GM12878 (cell line): ENCODE measurements at regions of chr1 and their contacts with region 1.

Region 1: DNA sequence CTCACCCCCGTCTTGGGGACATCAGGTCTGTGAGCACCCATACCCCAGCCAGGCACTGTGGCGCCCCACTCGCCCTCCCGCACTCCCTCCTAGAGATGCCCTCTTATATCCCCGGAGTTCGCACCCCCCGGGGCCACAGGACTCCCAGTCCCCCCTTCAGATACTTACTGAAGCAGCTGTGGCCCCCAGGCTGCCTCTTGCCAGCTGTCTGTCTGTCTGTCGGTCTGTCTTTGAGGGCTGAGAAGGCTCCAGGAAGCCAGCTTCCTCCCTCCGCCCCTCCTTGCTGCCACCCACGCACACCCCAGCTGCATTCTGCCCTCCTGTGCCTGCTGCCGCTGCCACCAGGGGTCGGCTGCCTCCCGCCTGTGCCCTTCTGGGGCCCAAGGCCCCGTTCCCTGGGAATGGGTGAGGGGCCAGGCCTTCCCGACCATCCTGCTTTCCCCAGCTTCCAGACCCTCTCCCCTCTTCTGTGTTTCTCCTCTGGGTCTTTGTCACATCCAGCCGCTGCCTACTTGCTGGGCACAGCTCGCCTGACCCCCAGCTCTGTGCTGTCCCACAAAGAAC is at the start of gene PTPN7:
- DNase-seq: peak; percentile 48
- ATAC-seq: peak; percentile 67
- H3K4me3 ChIP-seq: peak within 1 kb of the TSS; percentile 85
- H3K27ac ChIP-seq: peak within 1 kb of the TSS; percentile 97
- H3K4me1 ChIP-seq: peaks cover 58% of the 10 kb centered on the region
- H3K27me3 ChIP-seq: no peaks in the 10 kb centered on the region
- CTCF ChIP-seq: peak; percentile 55 to 79 (median 66)
- EP300 ChIP-seq: no peak
- POLR2A ChIP-seq: peak; percentile 51
- RAD21 ChIP-seq: peak; percentile 42; the same call in 1 of the 2 replicates
- polyA plus RNA-seq, gene PTPN7: 7.9 to 14.2 TPM

Region 2: DNA sequence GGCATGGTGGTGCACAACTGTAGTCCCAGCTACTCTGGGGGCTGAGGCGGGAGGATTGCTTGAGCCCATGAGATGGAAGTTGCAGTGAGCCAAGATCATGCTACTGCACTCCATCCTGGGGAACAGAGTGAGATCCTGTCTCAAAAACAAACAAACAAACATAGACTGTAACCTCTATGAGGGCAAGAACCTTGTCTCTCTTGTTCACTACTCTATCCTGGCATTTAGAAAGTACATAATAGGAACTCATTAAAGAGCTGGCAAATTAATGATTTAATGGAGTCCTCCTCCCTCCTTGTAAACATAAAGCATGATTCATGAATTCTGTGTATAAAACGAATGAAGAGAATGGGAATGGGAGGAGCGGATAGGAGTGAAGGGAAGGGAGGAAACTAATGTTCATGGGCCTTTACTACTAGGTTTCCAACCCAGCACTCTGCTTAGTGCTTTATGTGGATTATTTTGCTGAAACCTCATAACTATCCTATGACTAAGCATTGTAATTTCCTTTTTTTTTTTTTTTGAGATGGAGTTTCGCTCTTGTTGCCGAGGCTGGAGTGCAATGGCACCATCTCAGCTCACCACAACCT is 222.7 kb before region 1 on chr1:
- CTCF ChIA-PET with region 1: no interaction called
- POLR2A ChIA-PET with region 1: no interaction called
- RAD21 ChIA-PET with region 1: no interaction called
- SMC1A ChIA-PET with region 1: no interaction called
- in situ Hi-C with region 1: no loop called
- intact Hi-C with region 1: no loop called
- DNase-seq: no peak
- ATAC-seq: no peak
- H3K4me3 ChIP-seq: no peak overlapping the region
- H3K27ac ChIP-seq: no peak overlapping the region
- H3K4me1 ChIP-seq: no peaks in the 10 kb centered on the region
- H3K27me3 ChIP-seq: no peaks in the 10 kb centered on the region; a peak in 1 of 4 replicates
- CTCF ChIP-seq: no peak
- EP300 ChIP-seq: no peak
- POLR2A ChIP-seq: no peak
- RAD21 ChIP-seq: no peak

Region 3: GRCh38 chr1:202144402-202145067 is 15.9 kb before region 1 on chr1 and contains the start of gene ARL8A:
- CTCF ChIA-PET with region 1: interaction called, 25 read pairs
- POLR2A ChIA-PET with region 1: interaction called, 15 read pairs
- RAD21 ChIA-PET with region 1: interaction called, 11 read pairs
- SMC1A ChIA-PET with region 1: interaction called, 11 read pairs
- in situ Hi-C with region 1: no loop called
- intact Hi-C with region 1: no loop called
- DNase-seq: no peak
- ATAC-seq: peak; percentile 79
- H3K4me3 ChIP-seq: peak within 1 kb of the TSS; percentile 86
- H3K27ac ChIP-seq: peak within 1 kb of the TSS; percentile 76
- H3K4me1 ChIP-seq: peaks cover 14% of the 10 kb centered on the region
- H3K27me3 ChIP-seq: no peaks in the 10 kb centered on the region
- CTCF ChIP-seq: no peak
- EP300 ChIP-seq: no peak
- POLR2A ChIP-seq: peak; percentile 71
- RAD21 ChIP-seq: no peak
- polyA plus RNA-seq, gene ARL8A: 0.34 to 2.4 TPM

Region 4: GRCh38 chr1:202170726-202171125 is 10.3 kb after region 1 on chr1:
- CTCF ChIA-PET with region 1: interaction called, 66 read pairs
- POLR2A ChIA-PET with region 1: no interaction called
- RAD21 ChIA-PET with region 1: interaction called, 12 read pairs
- SMC1A ChIA-PET with region 1: interaction called, 21 read pairs
- in situ Hi-C with region 1: no loop called
- intact Hi-C with region 1: no loop called
- DNase-seq: no peak
- ATAC-seq: peak; percentile 59
- H3K4me3 ChIP-seq: no peak overlapping the region
- H3K27ac ChIP-seq: no peak overlapping the region
- H3K4me1 ChIP-seq: peaks cover 5% of the 10 kb centered on the region
- H3K27me3 ChIP-seq: no peaks in the 10 kb centered on the region
- CTCF ChIP-seq: peak in 1 of 3 experiments; percentile 28; a peak in 1 of 6 replicates
- EP300 ChIP-seq: no peak
- POLR2A ChIP-seq: no peak
- RAD21 ChIP-seq: no peak

Region 5: GRCh38 chr1:202184750-202185460 is 24.4 kb after region 1 on chr1:
- CTCF ChIA-PET with region 1: interaction called, 171 read pairs
- POLR2A ChIA-PET with region 1: interaction called, 4 read pairs
- RAD21 ChIA-PET with region 1: interaction called, 27 read pairs
- SMC1A ChIA-PET with region 1: interaction called, 13 read pairs
- in situ Hi-C with region 1: no loop called
- intact Hi-C with region 1: no loop called
- DNase-seq: no peak
- ATAC-seq: peak; percentile 84
- H3K4me3 ChIP-seq: no peak overlapping the region
- H3K27ac ChIP-seq: no peak overlapping the region
- H3K4me1 ChIP-seq: no peaks in the 10 kb centered on the region; the same call in 1 of the 2 replicates
- H3K27me3 ChIP-seq: peaks cover 0 to 3% of the 10 kb centered on the region in 2 experiments; a peak in 2 of 4 replicates
- CTCF ChIP-seq: peak; percentile 78 to 92 (median 89)
- EP300 ChIP-seq: no peak
- POLR2A ChIP-seq: no peak
- RAD21 ChIP-seq: peak; percentile 46